SK-N-SH (cell line): ENCODE measurements at regions of chr12 and their contacts with region 1.

Region 1: DNA sequence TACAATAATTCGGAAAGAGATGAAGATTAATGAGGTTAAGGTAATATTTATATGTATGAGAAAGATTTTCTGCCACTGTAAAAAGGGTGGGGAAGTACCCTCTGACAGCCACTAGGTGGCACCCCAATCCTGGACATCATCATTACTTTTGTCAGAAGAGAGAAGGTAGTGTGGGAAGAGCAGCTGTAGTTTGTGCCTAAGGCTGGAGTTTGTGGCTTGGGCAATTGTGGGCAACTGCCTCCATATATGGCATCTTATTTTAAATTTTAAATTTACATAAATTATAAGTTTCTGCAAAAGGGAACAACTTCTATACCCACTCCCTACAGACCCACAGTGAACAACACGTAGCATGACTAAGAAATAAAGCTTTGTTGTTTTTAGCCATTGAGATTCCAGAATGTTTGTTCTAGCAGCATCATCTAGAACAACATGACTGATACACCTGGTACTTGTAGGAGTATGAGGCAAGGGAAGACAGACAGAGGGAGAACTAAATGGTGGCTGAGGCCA is 34.4 kb upstream of the SYCP3 start:
- DNase-seq: peak; percentile 65
- H3K4me3 ChIP-seq: peak overlapping the region in 1 of 2 experiments; percentile 33; a peak in 1 of 4 replicates
- H3K27ac ChIP-seq: no peak overlapping the region
- H3K4me1 ChIP-seq: no peaks in the 10 kb centered on the region
- H3K27me3 ChIP-seq: no peaks in the 10 kb centered on the region
- CTCF ChIP-seq: peak; percentile 96
- EP300 ChIP-seq: no peak
- RAD21 ChIP-seq: peak; percentile 93

Region 2: DNA sequence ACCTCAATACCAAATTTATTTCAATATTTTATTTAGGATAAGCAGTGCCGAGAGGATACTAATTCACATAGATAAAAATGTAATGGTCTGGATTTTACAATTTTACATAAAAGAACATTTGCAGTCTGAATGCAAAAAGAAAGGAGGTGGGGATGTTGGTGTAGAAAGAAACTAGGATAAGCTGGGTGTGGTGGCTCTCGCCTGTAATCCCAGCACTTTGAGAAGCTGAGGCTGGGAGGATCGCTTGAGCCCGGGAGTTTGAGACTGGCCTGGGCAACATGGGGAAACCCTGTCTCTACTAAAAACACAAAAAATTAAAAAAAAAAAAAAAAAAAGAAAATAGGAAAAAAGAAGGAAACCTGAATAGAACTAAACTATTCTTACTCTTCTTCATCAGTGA is 51.3 kb before region 1 on chr12:
- CTCF ChIA-PET with region 1: no interaction called
- POLR2A ChIA-PET with region 1: no interaction called
- DNase-seq: no peak
- H3K4me3 ChIP-seq: no peak overlapping the region
- H3K27ac ChIP-seq: no peak overlapping the region
- H3K4me1 ChIP-seq: no peaks in the 10 kb centered on the region
- H3K27me3 ChIP-seq: no peaks in the 10 kb centered on the region
- CTCF ChIP-seq: no peak
- EP300 ChIP-seq: no peak
- RAD21 ChIP-seq: no peak

Region 3: GRCh38 chr12:101747697-101748096 is 26.0 kb before region 1 on chr12:
- CTCF ChIA-PET with region 1: interaction called, 11 read pairs
- POLR2A ChIA-PET with region 1: no interaction called
- DNase-seq: no peak
- H3K4me3 ChIP-seq: no peak overlapping the region
- H3K27ac ChIP-seq: no peak overlapping the region
- H3K4me1 ChIP-seq: peaks cover 0 to 4% of the 10 kb centered on the region in 2 experiments; a peak in 2 of 4 replicates
- H3K27me3 ChIP-seq: no peaks in the 10 kb centered on the region
- CTCF ChIP-seq: no peak
- EP300 ChIP-seq: no peak
- RAD21 ChIP-seq: no peak

Region 4: GRCh38 chr12:101759396-101760047 is 14.2 kb before region 1 on chr12:
- CTCF ChIA-PET with region 1: interaction called, 33 read pairs
- POLR2A ChIA-PET with region 1: no interaction called
- DNase-seq: peak; percentile 59
- H3K4me3 ChIP-seq: no peak overlapping the region; a peak in 1 of 4 replicates
- H3K27ac ChIP-seq: no peak overlapping the region
- H3K4me1 ChIP-seq: no peaks in the 10 kb centered on the region
- H3K27me3 ChIP-seq: no peaks in the 10 kb centered on the region
- CTCF ChIP-seq: peak; percentile 88
- EP300 ChIP-seq: no peak
- RAD21 ChIP-seq: peak; percentile 77

Region 5: DNA sequence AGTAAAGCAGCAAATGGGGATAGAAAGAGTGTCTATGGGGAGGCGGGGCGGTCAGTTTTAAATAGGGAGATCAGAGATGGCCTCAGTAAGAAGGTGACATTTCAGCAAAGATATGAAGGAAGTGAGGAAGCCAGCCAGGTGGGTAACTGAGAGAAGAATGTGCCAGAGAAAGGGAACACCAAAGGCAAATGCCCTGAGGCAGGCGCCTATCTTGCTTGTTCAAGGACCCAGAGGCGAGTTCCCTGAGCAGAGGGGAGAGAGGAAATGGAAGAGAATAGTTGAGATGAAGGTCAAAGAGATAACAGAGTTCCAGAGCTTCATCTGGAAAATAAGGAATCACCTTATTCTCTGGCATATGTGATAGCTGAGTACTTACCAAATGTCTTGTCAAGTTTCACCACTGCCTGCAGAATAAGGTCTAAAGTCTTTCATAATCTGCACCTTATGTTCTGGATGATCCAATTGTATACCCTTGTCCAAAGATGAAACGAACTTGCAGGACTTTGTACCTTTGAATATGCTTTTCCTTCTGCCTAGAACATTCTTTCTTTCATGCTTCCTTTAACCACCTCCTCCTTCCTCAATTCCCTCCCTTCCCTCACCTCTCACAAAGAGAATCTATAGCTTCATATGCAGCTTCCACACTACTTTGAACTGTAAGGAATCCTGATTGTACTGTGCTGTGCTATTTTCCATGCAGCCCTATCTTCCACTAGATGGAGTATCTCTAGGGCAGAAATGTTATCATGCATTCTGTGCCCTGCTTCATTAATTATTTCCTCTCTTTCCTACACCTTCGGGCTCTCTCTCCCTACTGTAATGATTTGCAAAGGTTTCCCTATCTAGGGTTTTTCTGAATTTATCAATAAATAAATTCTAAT is 18.6 kb after region 1 on chr12:
- CTCF ChIA-PET with region 1: interaction called, 25 read pairs
- POLR2A ChIA-PET with region 1: no interaction called
- DNase-seq: peak; percentile 10
- H3K4me3 ChIP-seq: no peak overlapping the region
- H3K27ac ChIP-seq: peak overlapping the region in 1 of 2 experiments; percentile 64; a peak in 1 of 4 replicates
- H3K4me1 ChIP-seq: no peaks in the 10 kb centered on the region
- H3K27me3 ChIP-seq: no peaks in the 10 kb centered on the region
- CTCF ChIP-seq: peak; percentile 46
- EP300 ChIP-seq: no peak
- RAD21 ChIP-seq: 0 out of 2 replicates have a peak, but pooled peaks have one; percentile 6

Region 6: GRCh38 chr12:101819467-101819866 is 45.8 kb after region 1 on chr12:
- CTCF ChIA-PET with region 1: interaction called, 10 read pairs
- POLR2A ChIA-PET with region 1: no interaction called
- DNase-seq: no peak
- H3K4me3 ChIP-seq: no peak overlapping the region
- H3K27ac ChIP-seq: no peak overlapping the region
- H3K4me1 ChIP-seq: peaks cover 0 to 3% of the 10 kb centered on the region in 2 experiments; a peak in 1 of 4 replicates
- H3K27me3 ChIP-seq: no peaks in the 10 kb centered on the region
- CTCF ChIP-seq: no peak
- EP300 ChIP-seq: no peak
- RAD21 ChIP-seq: no peak

Region 7: DNA sequence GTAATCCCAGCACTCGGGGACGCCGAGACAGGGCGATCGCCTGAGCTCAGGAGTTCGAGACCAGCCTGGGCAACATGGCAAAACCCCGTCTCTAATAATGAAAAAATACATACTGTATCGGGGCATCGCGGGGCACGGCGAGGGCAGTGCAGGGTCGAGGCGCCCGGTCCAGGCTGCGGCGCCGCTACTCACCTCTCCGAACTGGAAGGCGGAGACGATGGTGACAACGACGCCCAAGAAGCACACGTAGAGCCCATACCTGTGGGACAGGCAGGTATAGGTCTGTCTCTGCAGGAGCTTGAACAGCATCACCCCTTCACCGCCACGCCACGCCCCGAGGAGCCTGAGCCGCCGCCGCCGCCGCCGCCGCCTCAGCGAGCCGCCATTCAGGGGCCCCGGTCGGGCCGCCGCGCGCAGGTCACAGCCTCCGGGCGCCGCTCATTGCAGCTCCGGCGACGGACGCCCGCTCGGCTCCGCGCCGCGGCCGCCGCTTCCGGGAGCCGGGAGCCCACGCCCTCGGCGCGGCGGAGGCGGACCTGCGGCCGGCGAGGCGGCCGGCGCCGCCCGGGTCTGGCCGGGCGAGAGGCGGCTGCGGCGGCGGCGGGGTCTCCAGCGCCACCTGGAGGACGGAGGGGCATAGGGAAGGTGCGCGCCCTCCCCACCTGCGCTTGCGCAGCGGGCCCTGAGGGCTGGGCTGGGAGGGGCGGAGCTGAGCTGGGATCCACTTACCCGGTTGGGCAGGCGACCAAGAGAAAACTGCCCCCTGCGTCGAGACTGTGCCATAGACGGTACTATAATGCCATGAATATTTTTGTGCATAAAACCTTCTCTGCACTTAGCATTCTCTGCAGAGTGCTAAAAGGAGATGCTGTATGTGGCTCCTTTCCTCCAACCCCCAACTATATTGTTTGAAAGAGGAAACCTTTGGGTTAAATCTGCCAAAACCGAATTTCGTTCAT is 56.9 kb after region 1 on chr12 and contains the start of gene GNPTAB:
- CTCF ChIA-PET with region 1: interaction called, 40 read pairs
- POLR2A ChIA-PET with region 1: no interaction called
- DNase-seq: peak; percentile 98
- H3K4me3 ChIP-seq: peak within 1 kb of the TSS; percentile 86 to 98
- H3K27ac ChIP-seq: peak within 1 kb of the TSS in 1 of 2 experiments; percentile 51; a peak in 2 of 4 replicates
- H3K4me1 ChIP-seq: peaks cover 3 to 8% of the 10 kb centered on the region in 2 experiments; a peak in 2 of 4 replicates
- H3K27me3 ChIP-seq: no peaks in the 10 kb centered on the region
- CTCF ChIP-seq: peak; percentile 64
- EP300 ChIP-seq: no peak; a peak in 1 of 4 replicates
- RAD21 ChIP-seq: peak; percentile 54; the same call in 1 of the 2 replicates
- polyA plus RNA-seq, gene GNPTAB: 18.8 and 25.1 TPM in 2 replicates

Region 8: DNA sequence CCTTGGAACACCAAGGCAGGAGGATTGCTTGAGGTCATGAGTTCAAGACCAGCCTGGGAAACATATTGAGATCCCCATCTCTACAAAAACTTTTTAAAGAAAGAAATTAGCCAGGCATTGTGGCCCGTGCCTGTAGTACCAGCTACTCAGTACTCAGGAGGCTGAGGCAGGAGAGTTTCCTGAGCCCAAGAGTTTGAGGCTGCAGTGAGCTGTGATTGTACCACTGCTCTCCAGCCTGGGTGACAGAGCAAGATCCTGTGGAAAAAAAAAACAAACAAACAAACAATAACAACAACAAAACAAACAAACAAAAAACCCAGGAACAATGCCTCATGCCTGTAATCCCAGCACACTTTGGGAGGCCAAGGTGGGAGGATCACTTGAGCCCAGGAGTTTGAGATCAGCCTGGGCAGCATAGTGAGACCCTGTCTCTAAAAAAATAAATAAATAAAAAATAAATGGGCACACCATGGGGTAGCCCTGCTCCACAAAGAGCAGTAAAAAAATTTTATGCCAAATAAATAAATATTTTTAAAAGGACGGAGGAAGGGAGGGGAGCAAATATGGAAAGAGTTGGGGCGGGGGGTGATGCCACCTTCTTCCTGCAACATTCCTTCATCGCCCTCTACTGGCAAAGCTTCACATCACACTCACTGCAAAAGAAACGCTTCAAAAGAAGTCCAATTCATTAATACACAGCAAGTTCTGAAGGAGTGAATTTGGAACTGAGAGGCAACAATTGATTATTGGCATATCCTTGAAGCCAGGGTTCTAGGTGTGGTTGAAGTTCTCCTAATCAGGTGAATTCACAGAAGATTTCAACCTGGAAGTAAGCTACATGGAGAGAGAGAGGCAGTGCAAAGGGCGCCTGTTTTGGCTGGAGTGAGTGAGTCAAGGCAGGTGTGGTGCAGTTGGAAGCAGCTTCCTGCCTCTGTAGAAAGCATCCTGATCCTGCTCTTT is 65.9 kb after region 1 on chr12:
- CTCF ChIA-PET with region 1: interaction called, 73 read pairs
- POLR2A ChIA-PET with region 1: no interaction called
- DNase-seq: peak; percentile 62
- H3K4me3 ChIP-seq: no peak overlapping the region
- H3K27ac ChIP-seq: no peak overlapping the region
- H3K4me1 ChIP-seq: no peaks in the 10 kb centered on the region
- H3K27me3 ChIP-seq: no peaks in the 10 kb centered on the region
- CTCF ChIP-seq: peak; percentile 90
- EP300 ChIP-seq: no peak
- RAD21 ChIP-seq: peak; percentile 79

Region 9: DNA sequence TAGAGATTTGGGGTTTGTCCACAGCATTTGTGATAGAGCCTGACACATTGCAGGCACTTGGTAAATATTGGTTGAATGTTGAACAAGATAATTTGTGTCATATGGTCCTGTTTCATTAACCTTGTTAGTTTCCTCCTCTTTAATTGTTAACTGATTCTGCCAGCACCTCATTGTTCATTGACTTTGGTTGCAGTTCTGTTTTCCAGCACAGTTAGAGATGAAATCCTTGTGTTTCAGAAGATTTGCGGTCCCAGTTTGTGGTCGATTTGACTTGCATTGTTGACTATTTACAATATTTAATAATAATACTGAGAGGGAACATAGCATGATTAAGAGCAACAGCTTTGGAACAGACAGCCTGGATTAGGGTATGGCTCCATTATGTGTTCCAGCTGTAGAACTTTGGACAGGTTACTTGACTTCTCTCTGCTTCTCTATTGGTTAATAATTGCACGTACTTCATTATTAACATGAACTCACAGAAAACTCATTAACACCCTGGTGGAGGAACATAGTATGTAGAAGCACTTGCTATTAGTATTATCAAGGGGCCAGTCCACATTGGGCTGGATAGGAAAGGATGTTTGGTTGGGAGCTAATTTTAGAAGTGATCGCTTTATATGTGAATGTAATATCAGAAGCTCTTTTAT is 112.3 kb after region 1 on chr12:
- CTCF ChIA-PET with region 1: no interaction called
- POLR2A ChIA-PET with region 1: no interaction called
- DNase-seq: no peak
- H3K4me3 ChIP-seq: no peak overlapping the region
- H3K27ac ChIP-seq: no peak overlapping the region
- H3K4me1 ChIP-seq: no peaks in the 10 kb centered on the region; a peak in 1 of 4 replicates
- H3K27me3 ChIP-seq: no peaks in the 10 kb centered on the region
- CTCF ChIP-seq: no peak
- EP300 ChIP-seq: no peak
- RAD21 ChIP-seq: no peak